ENCODE measurements at regions of chr14 and their contacts with region 1.

Region 1: GRCh38 chr14:69079183-69079742 is 73.7 kb downstream of the DCAF5 start:
- DNase-seq: peak; percentile 95
- ATAC-seq: peak; percentile 80
- H3K4me3 ChIP-seq: peak overlapping the region; percentile 50
- H3K27ac ChIP-seq: peak overlapping the region; percentile 94
- H3K4me1 ChIP-seq: peaks cover 52% of the 10 kb centered on the region
- H3K27me3 ChIP-seq: no peaks in the 10 kb centered on the region
- CTCF ChIP-seq: no peak

Region 2: GRCh38 chr14:69013943-69014775 is 65.1 kb before region 1 on chr14:
- CTCF ChIA-PET with region 1: no interaction called
- POLR2A ChIA-PET with region 1: interaction called, 7 read pairs
- intact Hi-C with region 1: loop called (anchors 2 kb)
- DNase-seq: peak; percentile 95
- ATAC-seq: peak; percentile 87
- H3K4me3 ChIP-seq: no peak overlapping the region
- H3K27ac ChIP-seq: peak overlapping the region; percentile 30
- H3K4me1 ChIP-seq: peaks cover 30% of the 10 kb centered on the region
- H3K27me3 ChIP-seq: no peaks in the 10 kb centered on the region
- CTCF ChIP-seq: no peak

Region 3: GRCh38 chr14:69044965-69045555 is 34.2 kb before region 1 on chr14:
- CTCF ChIA-PET with region 1: no interaction called
- POLR2A ChIA-PET with region 1: no interaction called
- intact Hi-C with region 1: no loop called
- DNase-seq: no peak
- ATAC-seq: no peak
- H3K4me3 ChIP-seq: no peak overlapping the region
- H3K27ac ChIP-seq: no peak overlapping the region
- H3K4me1 ChIP-seq: no peaks in the 10 kb centered on the region
- H3K27me3 ChIP-seq: no peaks in the 10 kb centered on the region
- CTCF ChIP-seq: no peak

Region 4: DNA sequence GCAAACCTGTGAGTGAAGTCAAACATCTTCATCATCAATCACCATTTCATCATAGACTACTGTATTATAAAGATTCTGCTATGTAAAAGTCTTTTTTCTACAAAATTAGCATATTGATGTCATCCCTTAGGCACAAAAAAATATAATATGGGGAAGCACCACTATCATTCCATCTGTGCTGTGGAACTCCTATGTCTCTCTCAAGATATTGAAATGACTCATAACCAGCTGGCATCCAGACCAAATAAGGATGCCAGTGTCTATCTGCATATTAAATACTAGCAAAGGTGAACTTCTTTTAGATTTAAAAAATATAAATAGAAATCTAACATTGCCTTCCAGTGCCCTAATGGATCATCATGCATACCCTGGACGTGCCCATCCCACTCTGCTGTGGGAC is 91.6 kb after region 1 on chr14:
- CTCF ChIA-PET with region 1: no interaction called
- POLR2A ChIA-PET with region 1: no interaction called
- intact Hi-C with region 1: no loop called
- DNase-seq: peak; percentile 50
- ATAC-seq: peak; percentile 92
- H3K4me3 ChIP-seq: no peak overlapping the region
- H3K27ac ChIP-seq: no peak overlapping the region
- H3K4me1 ChIP-seq: no peaks in the 10 kb centered on the region
- H3K27me3 ChIP-seq: peaks cover 4% of the 10 kb centered on the region; the same call in 1 of the 2 replicates
- CTCF ChIP-seq: no peak